Transverse colon (tissue), 4 donors: ENCODE measurements at regions of chr2 and their contacts with region 1.

Region 1: GRCh38 chr2:222613715-222614331 is 42.1 kb downstream of the FARSB start:
- DNase-seq: no peak
- H3K4me3 ChIP-seq: no peak overlapping the region
- H3K27ac ChIP-seq: no peak overlapping the region
- H3K4me1 ChIP-seq: no peaks in the 10 kb centered on the region
- H3K27me3 ChIP-seq: no peaks in the 10 kb centered on the region
- CTCF ChIP-seq: peak; percentile 66 to 80 (median 73)
- EP300 ChIP-seq: no peak
- POLR2A ChIP-seq: no peak

Region 2: GRCh38 chr2:222057347-222058073 is 556.3 kb before region 1 on chr2:
- in situ Hi-C with region 1: loop called in 2 of 4 experiments (anchors 25 kb)
- intact Hi-C with region 1: no loop called
- DNase-seq: no peak
- H3K4me3 ChIP-seq: no peak overlapping the region
- H3K27ac ChIP-seq: no peak overlapping the region
- H3K4me1 ChIP-seq: peaks cover 0 to 6% (median 0%) of the 10 kb centered on the region in 4 donors
- H3K27me3 ChIP-seq: peaks cover 60% of the 10 kb centered on the region
- CTCF ChIP-seq: peak; percentile 46 to 56 (median 55)
- EP300 ChIP-seq: no peak
- POLR2A ChIP-seq: no peak

Region 3: GRCh38 chr2:222318026-222318711 is 295.7 kb before region 1 on chr2:
- in situ Hi-C with region 1: no loop called
- intact Hi-C with region 1: loop called (anchors 5 kb)
- DNase-seq: peak; percentile 75
- H3K4me3 ChIP-seq: peak overlapping the region; percentile 2 to 64 (median 40)
- H3K27ac ChIP-seq: peak overlapping the region; percentile 20 to 66 (median 29)
- H3K4me1 ChIP-seq: peaks cover 0 to 23% (median 18%) of the 10 kb centered on the region in 4 donors
- H3K27me3 ChIP-seq: peaks cover 84% of the 10 kb centered on the region
- CTCF ChIP-seq: peak; percentile 43 to 67 (median 50)
- EP300 ChIP-seq: no peak
- POLR2A ChIP-seq: no peak

Region 4: DNA sequence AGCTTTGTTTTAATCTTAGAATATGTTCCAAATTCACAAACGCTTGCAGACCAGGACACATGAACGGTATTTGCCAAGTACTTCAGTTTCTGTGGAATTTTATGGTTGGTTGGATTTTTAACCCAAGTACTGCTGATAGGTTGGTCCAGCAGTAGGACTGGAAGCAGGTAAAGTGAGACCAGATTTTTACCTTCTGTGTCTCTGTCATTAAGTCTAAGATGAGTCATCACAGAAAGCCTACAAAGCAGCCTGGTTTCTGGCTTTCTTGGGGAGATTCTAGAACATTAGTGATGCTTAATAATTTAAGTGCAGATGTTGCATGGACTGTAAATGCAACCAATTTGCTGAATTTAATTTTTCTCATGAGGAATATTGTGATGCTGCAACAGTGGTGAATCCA is 887.8 kb after region 1 on chr2:
- in situ Hi-C with region 1: no loop called
- intact Hi-C with region 1: no loop called
- DNase-seq: no peak
- H3K4me3 ChIP-seq: no peak overlapping the region
- H3K27ac ChIP-seq: no peak overlapping the region
- H3K4me1 ChIP-seq: no peaks in the 10 kb centered on the region
- H3K27me3 ChIP-seq: no peaks in the 10 kb centered on the region
- CTCF ChIP-seq: no peak
- EP300 ChIP-seq: no peak
- POLR2A ChIP-seq: no peak